ENCODE measurements at regions of chr9 and their contacts with region 1.

Region 1: GRCh38 chr9:22342491-22343217 is 104.0 kb upstream of the DMRTA1 start:
- DNase-seq: no peak
- ATAC-seq: peak; percentile 46

Region 2: GRCh38 chr9:22265038-22265437 is 77.6 kb before region 1 on chr9:
- intact Hi-C with region 1: no loop called
- DNase-seq: no peak
- ATAC-seq: no peak

Region 3: GRCh38 chr9:22392523-22392922 is 49.9 kb after region 1 on chr9:
- intact Hi-C with region 1: loop called (anchors 5 kb)
- DNase-seq: no peak
- ATAC-seq: no peak